Activated B cell treated with CpG ODN at 0.5 μM for 24 hours (primary cell): ENCODE measurements at regions of chr1 and their contacts with region 1.

Region 1: DNA sequence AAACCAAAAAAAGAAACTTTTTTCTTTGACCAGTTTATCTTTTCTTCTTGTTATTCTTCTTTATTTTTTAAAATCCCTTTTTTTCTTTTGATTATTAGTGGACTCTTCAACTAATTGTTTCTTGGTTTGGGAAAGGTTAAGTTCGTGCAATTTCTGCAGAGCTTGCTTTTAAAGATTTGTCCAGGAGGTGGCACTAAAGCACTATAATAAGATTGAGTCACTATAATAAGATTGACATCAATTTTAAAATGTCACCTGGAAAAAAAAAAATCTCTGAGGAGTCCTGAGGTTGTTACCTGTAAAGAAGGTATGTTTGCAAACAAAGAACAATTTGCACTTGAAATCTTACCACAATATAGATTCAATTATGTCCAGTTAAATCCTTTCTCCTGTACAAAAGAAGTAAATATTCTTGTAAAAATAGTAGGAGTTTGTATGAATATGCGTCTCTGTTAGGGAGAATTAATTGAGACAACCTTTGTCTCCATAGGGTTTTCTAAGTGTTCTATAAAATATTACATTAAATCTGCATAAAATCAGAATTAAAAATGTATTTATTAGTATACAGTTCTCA is 166.7 kb downstream of the ADGRL4 start:
- DNase-seq: no peak
- ATAC-seq: no peak
- H3K4me3 Mint-ChIP-seq: no peak overlapping the region
- H3K27ac Mint-ChIP-seq: no peak overlapping the region
- H3K4me1 Mint-ChIP-seq: no peaks in the 10 kb centered on the region
- H3K27me3 Mint-ChIP-seq: no peaks in the 10 kb centered on the region
- CTCF ChIP-seq: peak; percentile 32

Region 2: GRCh38 chr1:77134359-77134758 is 1705.4 kb before region 1 on chr1:
- CTCF ChIA-PET with region 1: no interaction called
- POLR2A ChIA-PET with region 1: no interaction called
- intact Hi-C with region 1: no loop called
- DNase-seq: no peak
- ATAC-seq: no peak
- H3K4me3 Mint-ChIP-seq: no peak overlapping the region
- H3K27ac Mint-ChIP-seq: no peak overlapping the region
- H3K4me1 Mint-ChIP-seq: no peaks in the 10 kb centered on the region
- H3K27me3 Mint-ChIP-seq: no peaks in the 10 kb centered on the region
- CTCF ChIP-seq: no peak

Region 3: GRCh38 chr1:79353224-79353623 is 513.4 kb after region 1 on chr1:
- CTCF ChIA-PET with region 1: no interaction called
- POLR2A ChIA-PET with region 1: no interaction called
- intact Hi-C with region 1: loop called (anchors 5 kb)
- DNase-seq: no peak
- ATAC-seq: no peak
- H3K4me3 Mint-ChIP-seq: no peak overlapping the region
- H3K27ac Mint-ChIP-seq: no peak overlapping the region
- H3K4me1 Mint-ChIP-seq: no peaks in the 10 kb centered on the region
- H3K27me3 Mint-ChIP-seq: no peaks in the 10 kb centered on the region
- CTCF ChIP-seq: no peak